Mammary epithelial cell (primary cell): ENCODE measurements at regions of chr13 and their contacts with region 1.

Region 1: GRCh38 chr13:110915057-110915873 is at the start of gene ANKRD10:
- DNase-seq: peak; percentile 99
- H3K4me3 ChIP-seq: peak within 1 kb of the TSS; percentile 62 to 100 (median 77)
- H3K27ac ChIP-seq: peak within 1 kb of the TSS; percentile 95
- H3K4me1 ChIP-seq: peaks cover 35% of the 10 kb centered on the region
- H3K27me3 ChIP-seq: no peaks in the 10 kb centered on the region
- CTCF ChIP-seq: peak; percentile 53 to 78
- total RNA-seq, gene ANKRD10: 45.3 to 50.3 TPM

Region 2: DNA sequence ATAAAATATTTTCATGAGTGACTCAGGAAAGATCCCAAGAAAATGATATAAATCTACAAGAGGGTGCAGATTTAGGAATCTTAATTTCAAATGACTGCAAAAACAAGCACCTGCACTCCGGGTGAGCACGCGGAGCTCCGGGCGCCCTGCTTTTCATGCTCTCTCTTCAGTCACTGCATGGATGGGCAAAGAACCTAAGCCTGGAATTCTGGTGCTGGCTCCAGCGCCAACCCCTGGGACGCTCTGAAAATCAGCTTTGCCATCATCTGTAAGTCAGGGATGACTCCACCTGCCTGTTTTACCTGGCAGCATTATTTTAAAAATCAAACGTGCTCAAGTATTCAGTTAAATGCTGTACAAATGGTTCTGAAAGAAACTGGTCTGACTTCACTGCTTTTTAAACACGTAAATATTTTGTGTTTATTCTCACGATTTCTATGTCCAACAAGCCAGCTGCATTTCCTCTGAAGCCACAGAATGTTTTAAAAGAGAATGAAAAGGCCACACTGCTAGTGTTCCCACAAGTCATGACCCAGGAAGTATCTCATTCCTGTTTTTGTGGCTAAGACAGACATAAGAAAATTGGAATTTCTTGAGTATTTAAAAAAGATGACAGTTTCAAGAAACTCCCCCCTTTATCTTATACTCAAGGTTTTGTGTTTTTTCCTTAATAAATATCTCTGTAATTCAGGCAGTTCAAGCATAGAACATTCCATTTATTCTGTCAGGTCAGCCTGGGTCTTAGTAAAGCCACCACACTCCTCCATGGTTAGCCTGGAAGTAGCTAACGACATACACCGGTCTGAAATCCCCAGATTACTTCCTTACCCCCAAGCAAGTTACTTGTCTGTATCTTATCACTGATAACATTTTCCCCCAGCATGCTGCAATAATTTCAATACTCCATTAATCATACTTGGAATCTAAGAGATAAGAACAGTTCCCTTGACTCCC is 689.4 kb before region 1 on chr13:
- CTCF ChIA-PET with region 1: no interaction called
- dilution Hi-C with region 1: no loop called
- in situ Hi-C with region 1: no loop called
- intact Hi-C with region 1: loop called (anchors 10 kb)
- DNase-seq: no peak
- H3K4me3 ChIP-seq: no peak overlapping the region
- H3K27ac ChIP-seq: no peak overlapping the region
- H3K4me1 ChIP-seq: peaks cover 6% of the 10 kb centered on the region
- H3K27me3 ChIP-seq: no peaks in the 10 kb centered on the region
- CTCF ChIP-seq: no peak

Region 3: DNA sequence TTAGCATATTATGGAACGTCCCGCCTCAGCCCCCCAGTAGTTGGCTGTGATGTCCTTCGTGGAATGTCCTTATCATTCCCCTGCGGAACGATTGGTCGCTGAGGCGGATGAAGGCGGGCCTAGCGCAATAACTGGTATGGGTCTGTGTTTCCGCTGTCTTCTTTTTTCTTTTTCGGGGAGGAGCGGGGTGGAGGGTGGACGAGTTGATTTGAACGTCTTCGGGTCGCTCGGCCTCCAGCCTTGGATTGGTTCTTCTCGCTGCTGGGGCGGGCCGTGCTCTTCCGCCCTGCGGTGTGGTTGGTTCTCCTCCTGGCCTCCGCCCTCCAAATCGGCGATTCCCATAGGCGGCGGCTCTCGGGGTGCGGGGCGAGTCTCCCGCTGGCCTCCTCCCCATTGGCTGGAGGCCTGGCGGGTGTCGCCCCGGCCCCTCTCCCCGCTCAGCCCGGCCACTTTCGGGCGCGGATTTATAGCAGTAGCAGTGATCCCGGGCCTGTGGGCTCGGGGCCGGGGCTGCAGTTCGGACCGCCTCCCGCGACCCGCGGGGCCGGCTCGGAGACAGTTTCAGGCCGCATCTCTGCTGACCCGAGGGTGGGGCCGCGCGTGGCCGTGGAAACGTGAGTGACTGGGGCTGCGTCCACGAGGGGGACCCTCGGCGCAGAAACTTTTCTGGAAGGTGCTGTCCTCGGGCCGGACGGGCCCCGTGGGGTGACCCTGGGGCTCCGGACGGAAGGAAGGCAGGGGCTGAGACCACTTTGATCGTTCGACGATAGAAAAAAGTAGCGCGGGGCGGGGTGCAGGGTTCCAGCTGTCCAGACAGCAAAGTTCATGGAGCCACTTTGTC is 199.7 kb before region 1 on chr13:
- CTCF ChIA-PET with region 1: no interaction called
- dilution Hi-C with region 1: no loop called
- in situ Hi-C with region 1: no loop called
- intact Hi-C with region 1: loop called (anchors 2 kb)
- DNase-seq: peak; percentile 100
- H3K4me3 ChIP-seq: peak overlapping the region; percentile 72 to 87 (median 73)
- H3K27ac ChIP-seq: peak overlapping the region; percentile 75
- H3K4me1 ChIP-seq: peaks cover 15% of the 10 kb centered on the region
- H3K27me3 ChIP-seq: no peaks in the 10 kb centered on the region
- CTCF ChIP-seq: peak in 1 of 2 donors; percentile 18

Region 4: GRCh38 chr13:110965038-110965754 is 49.9 kb after region 1 on chr13:
- CTCF ChIA-PET with region 1: no interaction called
- dilution Hi-C with region 1: no loop called
- in situ Hi-C with region 1: no loop called
- intact Hi-C with region 1: loop called (anchors 2 kb)
- DNase-seq: peak; percentile 96
- H3K4me3 ChIP-seq: no peak overlapping the region
- H3K27ac ChIP-seq: peak overlapping the region; percentile 59
- H3K4me1 ChIP-seq: peaks cover 20% of the 10 kb centered on the region
- H3K27me3 ChIP-seq: no peaks in the 10 kb centered on the region
- CTCF ChIP-seq: no peak

Region 5: GRCh38 chr13:111202745-111203144 is 287.5 kb after region 1 on chr13:
- CTCF ChIA-PET with region 1: no interaction called
- dilution Hi-C with region 1: no loop called
- in situ Hi-C with region 1: loop called in 1 of 2 experiments (anchors 25 kb)
- intact Hi-C with region 1: no loop called
- DNase-seq: no peak
- H3K4me3 ChIP-seq: no peak overlapping the region
- H3K27ac ChIP-seq: no peak overlapping the region
- H3K4me1 ChIP-seq: peaks cover 8% of the 10 kb centered on the region
- H3K27me3 ChIP-seq: no peaks in the 10 kb centered on the region
- CTCF ChIP-seq: no peak